AG04449 (cell line): ENCODE measurements at regions of chr15 and their contacts with region 1.

Region 1: DNA sequence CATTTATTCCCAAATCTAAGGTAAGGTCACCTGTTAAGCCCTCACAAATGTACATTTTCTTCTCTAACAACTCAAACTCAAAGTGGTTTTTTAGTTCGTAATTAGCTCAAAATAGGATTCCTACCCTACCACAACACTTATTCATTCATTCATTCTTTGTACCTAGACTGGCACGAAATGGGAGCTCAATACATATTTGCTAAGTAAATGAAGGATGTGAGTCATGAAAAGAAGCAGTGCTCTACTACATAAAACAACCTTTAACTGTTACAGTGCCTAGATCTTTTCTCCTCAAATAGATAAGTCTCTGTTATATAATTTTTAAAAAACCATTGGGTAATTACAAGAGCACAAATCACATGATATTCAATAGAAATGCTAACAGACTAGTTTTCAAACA is 13.1 kb downstream of the RSL24D1 start:
- DNase-seq: no peak
- H3K4me3 ChIP-seq: no peak overlapping the region
- CTCF ChIP-seq: no peak

Region 2: GRCh38 chr15:55168329-55168974 is 15.2 kb before region 1 on chr15:
- CTCF ChIA-PET with region 1: interaction called, 29 read pairs
- POLR2A ChIA-PET with region 1: no interaction called
- DNase-seq: peak; percentile 7
- H3K4me3 ChIP-seq: no peak overlapping the region
- CTCF ChIP-seq: peak; percentile 71